ENCODE measurements at regions of chr2 and their contacts with region 1.

Region 1: GRCh38 chr2:235746257-235747084 is 252.6 kb downstream of the AGAP1 start:
- DNase-seq: peak in 1 of 2 donors; percentile 67
- H3K4me3 ChIP-seq: no peak overlapping the region
- CTCF ChIP-seq: peak in 1 of 3 donors; percentile 79
- POLR2A ChIP-seq: no peak

Region 2: GRCh38 chr2:234745347-234745746 is 1001.1 kb before region 1 on chr2:
- intact Hi-C with region 1: no loop called
- DNase-seq: no peak
- H3K4me3 ChIP-seq: no peak overlapping the region
- CTCF ChIP-seq: no peak
- POLR2A ChIP-seq: no peak

Region 3: GRCh38 chr2:235135990-235136561 is 610.4 kb before region 1 on chr2:
- intact Hi-C with region 1: loop called (anchors 10 kb)
- DNase-seq: peak; percentile 57 to 91
- H3K4me3 ChIP-seq: no peak overlapping the region
- CTCF ChIP-seq: peak in 1 of 3 donors; percentile 67
- POLR2A ChIP-seq: no peak

Region 4: DNA sequence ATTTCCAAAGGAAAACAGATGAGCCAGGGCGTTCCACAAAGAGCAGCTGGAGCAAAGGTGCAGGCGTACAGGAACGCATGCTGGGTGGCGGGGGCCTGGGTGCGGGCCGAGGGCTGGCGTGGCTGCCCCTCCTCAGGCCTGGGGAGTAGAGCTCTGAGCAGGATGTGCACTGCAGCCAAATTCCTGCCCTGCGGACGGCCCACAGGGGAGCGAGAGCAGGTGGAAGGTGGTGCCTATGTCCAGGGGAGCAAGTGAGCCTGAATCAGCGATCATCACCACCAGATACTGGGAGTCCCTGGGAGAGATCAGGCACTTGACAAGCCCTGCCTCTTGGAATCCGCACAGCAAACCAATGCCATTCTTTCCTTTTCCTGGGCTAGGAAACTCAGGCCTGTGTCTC is 315.4 kb after region 1 on chr2:
- intact Hi-C with region 1: no loop called
- DNase-seq: no peak
- H3K4me3 ChIP-seq: no peak overlapping the region
- CTCF ChIP-seq: no peak
- POLR2A ChIP-seq: no peak

Measured in lower leg skin (tissue), 4 donors.